Activated CD8-positive, alpha-beta T cell treated with anti-CD3 and anti-CD28 coated beads for 36 hours (primary cell): ENCODE measurements at regions of chr20 and their contacts with region 1.

Region 1: GRCh38 chr20:44609511-44610312 is 27.3 kb downstream of the PKIG start:
- DNase-seq: peak; percentile 91
- ATAC-seq: peak; percentile 99
- H3K4me3 Mint-ChIP-seq: peak overlapping the region; percentile 39
- H3K27ac Mint-ChIP-seq: peak overlapping the region; percentile 86
- H3K4me1 Mint-ChIP-seq: peaks cover 33% of the 10 kb centered on the region
- H3K27me3 Mint-ChIP-seq: no peaks in the 10 kb centered on the region
- CTCF ChIP-seq: peak; percentile 94

Region 2: DNA sequence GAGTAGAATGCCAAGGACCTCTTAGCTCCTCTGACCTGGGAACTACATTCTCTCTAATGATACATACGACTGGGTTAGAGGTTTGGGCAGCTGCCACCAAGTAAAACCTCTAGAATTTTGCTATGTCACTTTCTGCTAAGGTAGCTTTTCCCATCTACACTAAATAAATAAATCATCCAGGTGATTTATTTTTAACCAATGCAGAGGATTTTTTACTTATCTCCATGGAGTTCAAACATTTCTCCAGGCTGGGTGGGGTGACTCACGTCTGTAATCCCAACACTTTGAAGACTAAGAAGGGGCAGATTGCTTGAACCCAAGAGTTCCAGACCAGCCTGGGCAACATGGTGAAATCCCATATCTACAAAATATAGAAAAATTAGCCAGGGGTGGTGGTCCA is 227.1 kb before region 1 on chr20:
- CTCF ChIA-PET with region 1: interaction called, 18 read pairs
- POLR2A ChIA-PET with region 1: no interaction called
- intact Hi-C with region 1: loop called (anchors 2 kb)
- DNase-seq: no peak
- ATAC-seq: no peak
- H3K4me3 Mint-ChIP-seq: no peak overlapping the region
- H3K27ac Mint-ChIP-seq: no peak overlapping the region
- H3K4me1 Mint-ChIP-seq: no peaks in the 10 kb centered on the region
- H3K27me3 Mint-ChIP-seq: peaks cover 7% of the 10 kb centered on the region
- CTCF ChIP-seq: no peak

Region 3: GRCh38 chr20:44475694-44476560 is 133.8 kb before region 1 on chr20 and contains the start of gene TTPAL:
- CTCF ChIA-PET with region 1: interaction called, 5 read pairs
- POLR2A ChIA-PET with region 1: interaction called, 3 read pairs
- intact Hi-C with region 1: loop called (anchors 10 kb)
- DNase-seq: peak; percentile 91
- ATAC-seq: peak; percentile 96
- H3K4me3 Mint-ChIP-seq: peak within 1 kb of the TSS; percentile 94
- H3K27ac Mint-ChIP-seq: peak within 1 kb of the TSS; percentile 97
- H3K4me1 Mint-ChIP-seq: peaks cover 20% of the 10 kb centered on the region
- H3K27me3 Mint-ChIP-seq: no peaks in the 10 kb centered on the region
- CTCF ChIP-seq: no peak
- total RNA-seq, gene TTPAL: 15.2 to 19.5 TPM

Region 4: GRCh38 chr20:44598423-44599305 is 11.0 kb before region 1 on chr20:
- CTCF ChIA-PET with region 1: interaction called, 28 read pairs
- POLR2A ChIA-PET with region 1: no interaction called
- intact Hi-C with region 1: no loop called
- DNase-seq: peak; percentile 24
- ATAC-seq: peak; percentile 81
- H3K4me3 Mint-ChIP-seq: peak overlapping the region; percentile 66
- H3K27ac Mint-ChIP-seq: peak overlapping the region; percentile 80
- H3K4me1 Mint-ChIP-seq: peaks cover 15% of the 10 kb centered on the region
- H3K27me3 Mint-ChIP-seq: no peaks in the 10 kb centered on the region
- CTCF ChIP-seq: peak; percentile 36

Region 5: GRCh38 chr20:44678242-44678641 is 68.5 kb after region 1 on chr20:
- CTCF ChIA-PET with region 1: interaction called, 15 read pairs
- POLR2A ChIA-PET with region 1: interaction called, 3 read pairs
- intact Hi-C with region 1: loop called (anchors 10 kb)
- DNase-seq: no peak
- ATAC-seq: no peak
- H3K4me3 Mint-ChIP-seq: no peak overlapping the region
- H3K27ac Mint-ChIP-seq: no peak overlapping the region
- H3K4me1 Mint-ChIP-seq: no peaks in the 10 kb centered on the region
- H3K27me3 Mint-ChIP-seq: no peaks in the 10 kb centered on the region
- CTCF ChIP-seq: no peak